Breast epithelium (tissue), 4 donors: ENCODE measurements at regions of chr3 and their contacts with region 1.

Region 1: DNA sequence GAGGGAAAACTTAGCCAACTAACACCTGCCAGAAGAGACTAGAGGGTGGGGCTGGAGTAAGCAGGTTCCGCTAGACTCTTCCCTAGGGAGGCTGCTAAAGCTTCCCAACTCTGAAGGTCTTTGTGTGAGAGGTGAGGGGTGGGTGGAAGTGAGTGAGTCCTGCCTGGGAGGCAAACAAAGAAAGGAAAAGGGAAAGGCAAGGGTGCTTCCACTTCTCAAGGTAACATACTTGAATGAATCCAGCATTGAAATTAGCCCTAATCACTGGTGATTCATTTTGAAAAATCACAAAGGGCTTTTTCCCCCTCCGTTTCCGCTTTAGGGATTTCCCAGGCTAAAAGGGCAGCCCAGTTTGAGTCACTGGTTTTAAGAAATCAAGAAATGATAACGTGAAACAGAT is 220.5 kb upstream of the ADAMTS9 start:
- DNase-seq: no peak
- H3K4me3 ChIP-seq: no peak overlapping the region
- H3K27ac ChIP-seq: peak overlapping the region in 1 of 2 donors; percentile 53
- H3K4me1 ChIP-seq: no peaks in the 10 kb centered on the region
- H3K27me3 ChIP-seq: no peaks in the 10 kb centered on the region
- CTCF ChIP-seq: no peak
- POLR2A ChIP-seq: no peak

Region 2: GRCh38 chr3:64873400-64873799 is 34.9 kb before region 1 on chr3:
- intact Hi-C with region 1: no loop called
- DNase-seq: no peak
- H3K4me3 ChIP-seq: no peak overlapping the region
- H3K27ac ChIP-seq: no peak overlapping the region
- H3K4me1 ChIP-seq: no peaks in the 10 kb centered on the region
- H3K27me3 ChIP-seq: no peaks in the 10 kb centered on the region
- CTCF ChIP-seq: no peak
- POLR2A ChIP-seq: no peak

Region 3: GRCh38 chr3:64930891-64931290 is 22.6 kb after region 1 on chr3:
- intact Hi-C with region 1: loop called (anchors 1 kb)
- DNase-seq: no peak
- H3K4me3 ChIP-seq: no peak overlapping the region
- H3K27ac ChIP-seq: no peak overlapping the region
- H3K4me1 ChIP-seq: no peaks in the 10 kb centered on the region
- H3K27me3 ChIP-seq: no peaks in the 10 kb centered on the region
- CTCF ChIP-seq: no peak
- POLR2A ChIP-seq: no peak

Region 4: GRCh38 chr3:66413151-66413751 is 1505.0 kb after region 1 on chr3:
- intact Hi-C with region 1: no loop called
- DNase-seq: no peak
- H3K4me3 ChIP-seq: no peak overlapping the region
- H3K27ac ChIP-seq: peak overlapping the region in 1 of 2 donors; percentile 9
- H3K4me1 ChIP-seq: peaks cover 0 to 4% of the 10 kb centered on the region in 2 donors
- H3K27me3 ChIP-seq: no peaks in the 10 kb centered on the region
- CTCF ChIP-seq: no peak
- POLR2A ChIP-seq: no peak